Heart right ventricle (tissue), 16 donors: ENCODE measurements at regions of chr15 and their contacts with region 1.

Region 1: GRCh38 chr15:35665896-35666536 is 120.1 kb upstream of the DPH6 start:
- DNase-seq: peak; percentile 32 to 80
- ATAC-seq: peak; percentile 78 to 97 (median 92)
- H3K4me3 ChIP-seq: peak overlapping the region in 1 of 10 donors; percentile 2
- H3K27ac ChIP-seq: peak overlapping the region; percentile 49 to 88 (median 76)
- H3K4me1 ChIP-seq: peaks cover 4 to 51% (median 36%) of the 10 kb centered on the region in 9 donors
- H3K27me3 ChIP-seq: no peaks in the 10 kb centered on the region
- CTCF ChIP-seq: no peak

Region 2: DNA sequence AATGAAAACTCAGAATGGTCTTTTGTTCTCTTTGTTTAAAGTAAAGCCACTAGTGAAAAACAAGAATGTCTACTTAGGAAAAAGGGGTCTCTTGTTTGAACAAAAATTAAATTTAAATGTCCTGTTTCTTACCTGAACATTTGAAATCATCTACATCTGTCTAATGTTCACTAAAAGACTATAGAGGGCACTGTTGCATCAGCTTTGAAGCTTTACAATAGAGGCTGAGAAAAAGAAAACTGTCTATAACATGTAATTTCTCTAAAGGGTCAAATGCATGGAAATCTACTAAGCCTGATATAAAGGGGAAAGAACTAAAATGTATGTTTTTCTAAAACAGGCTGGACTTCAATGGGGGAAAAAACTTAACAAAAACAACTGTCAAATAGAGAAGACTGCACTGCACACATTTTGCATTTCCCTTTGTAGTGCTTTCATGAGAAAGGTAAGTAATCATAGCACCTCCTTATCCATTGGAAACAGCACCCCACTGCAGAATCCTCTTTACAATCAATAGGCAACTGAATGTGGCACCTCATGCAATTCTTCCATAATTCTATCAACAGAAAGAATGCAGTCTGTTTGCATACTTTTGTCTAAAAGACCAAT is 146.4 kb before region 1 on chr15:
- intact Hi-C with region 1: loop called in 2 of 10 experiments (anchors 2 to 5 kb)
- DNase-seq: peak in 1 of 2 donors; percentile 13
- ATAC-seq: peak in 5 of 8 donors; percentile 66 to 80 (median 72)
- H3K4me3 ChIP-seq: no peak overlapping the region
- H3K27ac ChIP-seq: no peak overlapping the region
- H3K4me1 ChIP-seq: peaks cover 0 to 29% (median 10%) of the 10 kb centered on the region in 9 donors
- H3K27me3 ChIP-seq: no peaks in the 10 kb centered on the region
- CTCF ChIP-seq: peak in 8 of 9 donors; percentile 56 to 86 (median 69)

Region 3: GRCh38 chr15:35583863-35584528 is 82.0 kb before region 1 on chr15:
- intact Hi-C with region 1: loop called in 1 of 10 experiments (anchors 2 kb)
- DNase-seq: peak in 1 of 2 donors; percentile 38
- ATAC-seq: peak; percentile 75 to 97 (median 92)
- H3K4me3 ChIP-seq: no peak overlapping the region
- H3K27ac ChIP-seq: peak overlapping the region; percentile 36 to 86 (median 68)
- H3K4me1 ChIP-seq: peaks cover 0 to 33% (median 7%) of the 10 kb centered on the region in 9 donors
- H3K27me3 ChIP-seq: no peaks in the 10 kb centered on the region
- CTCF ChIP-seq: no peak

Region 4: GRCh38 chr15:35690698-35691116 is 24.7 kb after region 1 on chr15:
- intact Hi-C with region 1: loop called in 2 of 10 experiments (anchors 1 kb)
- DNase-seq: no peak
- ATAC-seq: peak; percentile 75 to 96 (median 94)
- H3K4me3 ChIP-seq: peak overlapping the region in 1 of 10 donors; percentile 10
- H3K27ac ChIP-seq: peak overlapping the region; percentile 59 to 91 (median 82)
- H3K4me1 ChIP-seq: peaks cover 8 to 67% (median 44%) of the 10 kb centered on the region in 9 donors
- H3K27me3 ChIP-seq: no peaks in the 10 kb centered on the region
- CTCF ChIP-seq: no peak

Region 5: DNA sequence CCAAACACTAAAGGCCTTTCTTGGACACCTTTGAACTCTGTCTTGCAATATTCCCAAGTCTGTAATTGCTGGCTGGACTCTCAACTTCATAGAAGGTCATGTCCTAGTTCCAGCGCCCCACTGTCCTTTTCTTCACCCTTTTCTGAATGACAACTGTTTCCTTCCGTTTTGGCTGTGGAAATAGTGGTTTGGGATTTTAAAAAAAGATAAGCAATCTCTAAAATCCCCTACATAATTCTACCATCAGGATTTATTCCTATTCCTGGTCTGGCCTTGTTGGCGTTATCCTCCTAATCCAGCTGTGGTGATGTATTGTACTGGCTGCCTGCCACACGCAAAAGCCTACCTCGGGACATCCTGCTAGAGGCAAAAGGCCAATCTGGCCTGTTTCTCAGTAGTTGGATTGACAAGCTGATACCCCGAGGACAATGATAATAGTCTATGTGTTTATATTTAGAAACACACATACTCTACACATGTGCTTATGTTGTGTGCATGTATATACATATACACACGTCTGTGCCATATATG is 320.2 kb after region 1 on chr15:
- intact Hi-C with region 1: loop called in 1 of 10 experiments (anchors 5 kb)
- DNase-seq: peak; percentile 57 to 83
- ATAC-seq: peak; percentile 82 to 98 (median 92)
- H3K4me3 ChIP-seq: no peak overlapping the region
- H3K27ac ChIP-seq: peak overlapping the region in 3 of 10 donors; percentile 1 to 42 (median 21)
- H3K4me1 ChIP-seq: peaks cover 0 to 36% (median 23%) of the 10 kb centered on the region in 9 donors
- H3K27me3 ChIP-seq: no peaks in the 10 kb centered on the region
- CTCF ChIP-seq: no peak